Mucosa of descending colon (tissue), 3 donors: ENCODE measurements at regions of chr4 and their contacts with region 1.

Region 1: GRCh38 chr4:112099701-112100297 is 45.5 kb upstream of the FAM241A start:
- DNase-seq: no peak
- ATAC-seq: peak; percentile 69
- H3K4me3 ChIP-seq: no peak overlapping the region
- H3K4me1 ChIP-seq: no peaks in the 10 kb centered on the region
- CTCF ChIP-seq: peak; percentile 13

Region 2: GRCh38 chr4:112231779-112232713 is 132.2 kb after region 1 on chr4 and contains the start of gene AP1AR:
- intact Hi-C with region 1: loop called (anchors 5 to 10 kb)
- DNase-seq: peak; percentile 83 to 93 (median 91)
- ATAC-seq: peak; percentile 76
- H3K4me3 ChIP-seq: peak within 1 kb of the TSS; percentile 91
- H3K4me1 ChIP-seq: peaks cover 16% of the 10 kb centered on the region
- CTCF ChIP-seq: no peak
- total RNA-seq, gene AP1AR: 32.3 to 51.5 (median 35.9) TPM